ENCODE measurements at regions of chr12 and their contacts with region 1.

Region 1: GRCh38 chr12:21849878-21850277 is 75.4 kb upstream of the KCNJ8 start:
- DNase-seq: no peak
- ATAC-seq: no peak
- H3K4me3 Mint-ChIP-seq: no peak overlapping the region
- H3K27ac Mint-ChIP-seq: no peak overlapping the region
- H3K4me1 Mint-ChIP-seq: no peaks in the 10 kb centered on the region
- H3K27me3 Mint-ChIP-seq: no peaks in the 10 kb centered on the region
- CTCF ChIP-seq: no peak

Region 2: DNA sequence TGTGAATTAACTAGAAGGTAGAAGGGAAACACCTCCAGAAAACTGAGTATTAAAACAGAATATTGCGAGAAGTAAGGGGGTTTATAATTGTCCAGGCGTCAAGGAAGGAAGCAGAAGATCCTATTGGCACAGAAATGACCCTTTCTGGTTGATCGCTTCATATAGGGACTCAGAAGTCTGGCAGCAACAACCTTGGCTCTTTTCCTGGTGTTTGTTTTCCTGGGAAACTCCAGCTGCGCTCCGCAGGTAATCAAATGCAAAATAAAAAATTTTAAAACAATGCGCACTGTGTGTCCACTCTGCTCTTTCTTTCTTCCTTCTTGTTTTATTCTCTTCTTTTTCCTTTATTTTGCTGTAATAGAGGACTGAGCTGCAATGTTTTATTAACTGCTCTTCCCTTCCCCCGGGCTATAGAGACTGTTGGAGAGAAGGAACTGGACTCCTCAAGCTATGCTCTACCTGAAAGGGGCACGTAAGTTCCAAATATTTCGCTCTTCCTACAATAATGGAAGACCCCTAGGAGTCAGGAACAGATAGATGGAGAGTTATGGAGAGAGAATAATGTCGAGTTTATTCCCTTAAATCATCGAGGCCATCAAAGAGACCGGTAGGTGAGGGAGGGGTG is 323.0 kb before region 1 on chr12:
- CTCF ChIA-PET with region 1: no interaction called
- POLR2A ChIA-PET with region 1: interaction called, 11 read pairs
- DNase-seq: no peak
- ATAC-seq: peak; percentile 3; the same call in 1 of the 2 replicates
- H3K4me3 Mint-ChIP-seq: peak overlapping the region; percentile 91
- H3K27ac Mint-ChIP-seq: no peak overlapping the region
- H3K4me1 Mint-ChIP-seq: peaks cover 12% of the 10 kb centered on the region
- H3K27me3 Mint-ChIP-seq: peaks cover 57% of the 10 kb centered on the region
- CTCF ChIP-seq: no peak